ENCODE measurements at regions of chr14 and their contacts with region 1.

Region 1: GRCh38 chr14:88824314-88825077 is at the start of gene TTC8:
- DNase-seq: peak; percentile 85
- H3K4me3 ChIP-seq: peak within 1 kb of the TSS; percentile 53 to 86 (median 66)
- H3K27ac ChIP-seq: peak within 1 kb of the TSS; percentile 90
- H3K4me1 ChIP-seq: peaks cover 11% of the 10 kb centered on the region
- H3K27me3 ChIP-seq: no peaks in the 10 kb centered on the region
- CTCF ChIP-seq: no peak
- total RNA-seq, gene TTC8: 29.9 to 37.0 TPM

Region 2: GRCh38 chr14:88518592-88519512 is 305.6 kb before region 1 on chr14:
- CTCF ChIA-PET with region 1: no interaction called
- dilution Hi-C with region 1: no loop called
- in situ Hi-C with region 1: no loop called
- intact Hi-C with region 1: no loop called
- DNase-seq: peak; percentile 73
- H3K4me3 ChIP-seq: no peak overlapping the region
- H3K27ac ChIP-seq: no peak overlapping the region
- H3K4me1 ChIP-seq: peaks cover 3% of the 10 kb centered on the region
- H3K27me3 ChIP-seq: no peaks in the 10 kb centered on the region
- CTCF ChIP-seq: no peak

Region 3: GRCh38 chr14:88792572-88793258 is 31.8 kb before region 1 on chr14 and contains the start of gene EML5:
- CTCF ChIA-PET with region 1: no interaction called
- dilution Hi-C with region 1: no loop called
- in situ Hi-C with region 1: no loop called
- intact Hi-C with region 1: loop called (anchors 2 kb)
- DNase-seq: peak; percentile 84
- H3K4me3 ChIP-seq: peak within 1 kb of the TSS; percentile 68 to 80 (median 71)
- H3K27ac ChIP-seq: peak within 1 kb of the TSS; percentile 25
- H3K4me1 ChIP-seq: peaks cover 5% of the 10 kb centered on the region
- H3K27me3 ChIP-seq: no peaks in the 10 kb centered on the region
- CTCF ChIP-seq: peak; percentile 17 to 44
- total RNA-seq, gene EML5: 0.33 to 2.7 TPM

Region 4: GRCh38 chr14:88849716-88850115 is 25.2 kb after region 1 on chr14:
- CTCF ChIA-PET with region 1: no interaction called
- dilution Hi-C with region 1: no loop called
- in situ Hi-C with region 1: no loop called
- intact Hi-C with region 1: loop called (anchors 2 kb)
- DNase-seq: no peak
- H3K4me3 ChIP-seq: no peak overlapping the region
- H3K27ac ChIP-seq: no peak overlapping the region
- H3K4me1 ChIP-seq: peaks cover 21% of the 10 kb centered on the region
- H3K27me3 ChIP-seq: no peaks in the 10 kb centered on the region
- CTCF ChIP-seq: no peak